ENCODE measurements at regions of chr10 and their contacts with region 1.

Region 1: DNA sequence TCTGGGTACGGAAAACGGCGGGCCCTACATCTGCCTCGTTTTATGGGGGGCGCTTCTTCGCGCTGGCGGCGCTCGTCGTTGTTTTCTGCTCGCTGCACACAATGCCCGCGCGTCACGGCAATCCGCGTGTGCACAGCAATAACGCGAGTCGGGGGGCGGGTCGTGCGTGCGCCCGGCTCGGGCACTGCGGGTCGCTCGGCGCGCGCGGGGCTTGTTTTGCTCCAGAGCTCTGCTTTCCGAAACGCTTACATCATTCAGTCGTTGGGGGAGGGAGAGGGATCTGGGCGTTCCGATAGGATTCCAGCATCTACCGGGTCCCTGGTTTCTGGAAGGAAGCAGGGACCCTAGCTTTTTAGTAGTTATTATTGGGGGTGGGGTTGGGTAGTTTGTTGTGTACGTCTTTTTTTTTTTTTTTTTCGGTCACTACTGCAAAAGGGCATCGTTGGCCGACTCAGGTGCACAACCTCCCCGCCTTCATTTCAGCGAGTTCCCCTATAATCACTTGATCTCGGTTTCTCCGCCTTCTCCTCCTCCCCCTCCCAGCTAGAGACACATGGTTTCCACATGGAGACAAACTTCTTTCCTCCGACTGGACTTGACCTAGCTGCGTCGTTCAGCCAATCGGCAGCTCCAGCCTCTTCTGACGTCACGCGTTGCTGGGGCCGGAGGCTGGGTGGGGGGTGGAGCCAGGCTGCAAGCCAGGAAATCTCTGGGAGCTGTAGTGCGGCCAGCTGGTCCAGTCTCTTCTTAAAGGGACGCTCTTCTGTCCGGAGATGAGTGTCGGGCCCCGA is 3.5 kb downstream of the MXI1 start:
- DNase-seq: peak; percentile 97 to 99
- ATAC-seq: peak; percentile 90
- H3K4me3 ChIP-seq: peak overlapping the region; percentile 63 to 84
- H3K27ac ChIP-seq: peak overlapping the region; percentile 86 to 91
- H3K4me1 ChIP-seq: peaks cover 2 to 5% of the 10 kb centered on the region in 2 donors
- H3K27me3 ChIP-seq: no peaks in the 10 kb centered on the region

Region 2: DNA sequence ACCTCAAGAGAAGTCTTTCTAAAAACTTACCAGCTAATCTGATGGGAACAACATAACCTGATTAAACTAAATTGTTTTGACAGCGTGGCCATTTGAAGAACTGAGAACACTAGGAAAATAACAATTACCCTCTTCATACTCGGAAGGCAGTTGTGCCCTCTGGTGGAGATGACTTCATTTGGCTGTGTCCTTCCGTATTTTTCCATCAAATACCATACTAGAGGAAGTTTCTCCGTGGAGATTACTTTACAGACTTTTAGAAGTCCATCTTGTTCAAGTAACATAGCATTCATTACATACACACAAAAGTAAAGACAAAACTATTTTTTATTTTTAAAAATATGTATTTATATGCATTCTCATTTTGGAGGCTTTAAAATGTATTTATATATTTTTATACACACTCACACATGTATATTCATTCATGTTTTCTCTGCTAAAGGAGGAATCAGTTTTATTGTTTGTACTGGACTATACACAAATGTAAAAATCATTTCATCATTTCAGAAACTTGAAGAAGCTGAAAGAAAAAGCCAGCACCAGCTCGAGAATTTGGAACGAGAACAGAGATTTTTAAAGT is 68.6 kb after region 1 on chr10:
- intact Hi-C with region 1: loop called in 1 of 2 experiments (anchors 2 kb)
- DNase-seq: peak in 1 of 2 donors; percentile 59
- ATAC-seq: peak; percentile 88
- H3K4me3 ChIP-seq: no peak overlapping the region
- H3K27ac ChIP-seq: no peak overlapping the region
- H3K4me1 ChIP-seq: peaks cover 3 to 9% of the 10 kb centered on the region in 2 donors
- H3K27me3 ChIP-seq: no peaks in the 10 kb centered on the region

Region 3: GRCh38 chr10:110530131-110530831 is 319.4 kb after region 1 on chr10:
- intact Hi-C with region 1: no loop called
- DNase-seq: peak; percentile 60 to 86
- ATAC-seq: peak; percentile 68
- H3K4me3 ChIP-seq: peak overlapping the region in 1 of 2 donors; percentile 10
- H3K27ac ChIP-seq: no peak overlapping the region
- H3K4me1 ChIP-seq: no peaks in the 10 kb centered on the region
- H3K27me3 ChIP-seq: no peaks in the 10 kb centered on the region